ENCODE measurements at regions of chr14 and their contacts with region 1.

Region 1: GRCh38 chr14:69611201-69612011 is at the start of gene SUSD6:
- DNase-seq: peak; percentile 81 to 98 (median 89)

Region 2: DNA sequence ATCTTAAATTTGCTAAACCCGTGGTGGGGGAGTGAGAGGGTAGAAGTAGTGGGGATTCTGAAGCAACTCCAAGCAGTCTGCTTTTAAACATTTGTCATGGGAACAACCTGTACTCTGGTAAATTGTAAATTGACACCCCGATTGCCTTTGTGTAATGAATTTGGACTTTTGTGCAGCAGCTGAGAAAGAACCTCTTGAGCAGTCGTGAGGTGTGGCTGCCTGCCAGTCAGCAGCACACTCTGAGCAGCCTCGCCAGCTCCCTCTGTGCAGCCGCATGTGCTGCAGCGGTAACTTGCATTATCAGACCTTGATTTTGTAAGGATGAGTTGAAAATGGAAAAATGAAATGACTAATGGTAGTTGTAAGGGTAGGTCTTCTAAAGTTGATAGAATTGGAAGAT is 74.3 kb after region 1 on chr14:
- intact Hi-C with region 1: loop called (anchors 10 kb)
- DNase-seq: peak; percentile 41 to 95 (median 68)

Region 3: GRCh38 chr14:69712599-69713088 is 101.2 kb after region 1 on chr14:
- intact Hi-C with region 1: loop called (anchors 5 kb)
- DNase-seq: no peak

Region 4: GRCh38 chr14:69766984-69767368 is 155.6 kb after region 1 on chr14 and contains the start of gene SRSF5:
- intact Hi-C with region 1: loop called (anchors 1 kb)
- DNase-seq: peak; percentile 93 to 100 (median 96)